ENCODE measurements at regions of chr10 and their contacts with region 1.

Region 1: DNA sequence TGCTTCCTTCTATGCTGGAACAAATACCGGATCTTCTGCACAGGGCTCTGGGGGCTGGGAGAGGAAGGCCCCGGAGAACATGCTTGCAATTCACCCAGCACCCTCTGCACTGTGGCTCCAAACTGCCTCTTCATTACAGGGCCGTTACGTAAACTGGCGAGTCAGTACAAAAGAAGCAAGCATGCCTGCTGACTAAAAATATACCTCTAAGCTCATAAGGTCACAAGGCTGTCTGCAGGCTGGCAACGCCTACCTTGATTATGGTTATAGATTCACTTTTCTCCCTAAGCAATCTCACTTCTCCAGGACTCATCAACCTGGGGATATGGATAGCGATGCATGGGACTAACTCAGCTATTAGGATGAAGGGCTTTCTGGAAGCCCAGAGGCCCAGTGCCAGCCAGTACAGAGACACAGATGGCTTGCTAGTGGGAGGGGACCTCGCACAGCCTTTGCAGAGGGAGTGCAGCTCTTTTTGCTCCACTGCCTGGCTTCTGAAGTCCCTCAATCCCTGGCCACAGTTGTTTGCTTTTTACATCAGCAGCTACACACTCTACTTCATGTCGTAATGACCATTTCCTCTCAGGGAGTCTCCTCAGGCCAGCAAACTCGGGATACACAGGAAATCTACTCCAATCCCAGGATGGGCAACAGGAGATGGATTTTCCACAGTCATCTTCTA is 96.1 kb downstream of the SH3PXD2A start:
- DNase-seq: no peak
- H3K4me3 ChIP-seq: no peak overlapping the region
- H3K27ac ChIP-seq: no peak overlapping the region
- H3K4me1 ChIP-seq: peaks cover 8 to 16% (median 12%) of the 10 kb centered on the region in 4 experiments
- H3K27me3 ChIP-seq: no peaks in the 10 kb centered on the region
- CTCF ChIP-seq: no peak
- EP300 ChIP-seq: no peak
- POLR2A ChIP-seq: no peak
- RAD21 ChIP-seq: no peak

Region 2: GRCh38 chr10:103507235-103508191 is 251.7 kb before region 1 on chr10:
- CTCF ChIA-PET with region 1: no interaction called
- POLR2A ChIA-PET with region 1: no interaction called
- DNase-seq: no peak
- H3K4me3 ChIP-seq: no peak overlapping the region
- H3K27ac ChIP-seq: no peak overlapping the region
- H3K4me1 ChIP-seq: no peaks in the 10 kb centered on the region; a peak in 2 of 7 replicates
- H3K27me3 ChIP-seq: no peaks in the 10 kb centered on the region
- CTCF ChIP-seq: peak in 1 of 3 experiments; percentile 15; a peak in 1 of 4 replicates
- EP300 ChIP-seq: no peak
- POLR2A ChIP-seq: no peak
- RAD21 ChIP-seq: peak; percentile 8 to 32; a peak in 3 of 4 replicates

Region 3: DNA sequence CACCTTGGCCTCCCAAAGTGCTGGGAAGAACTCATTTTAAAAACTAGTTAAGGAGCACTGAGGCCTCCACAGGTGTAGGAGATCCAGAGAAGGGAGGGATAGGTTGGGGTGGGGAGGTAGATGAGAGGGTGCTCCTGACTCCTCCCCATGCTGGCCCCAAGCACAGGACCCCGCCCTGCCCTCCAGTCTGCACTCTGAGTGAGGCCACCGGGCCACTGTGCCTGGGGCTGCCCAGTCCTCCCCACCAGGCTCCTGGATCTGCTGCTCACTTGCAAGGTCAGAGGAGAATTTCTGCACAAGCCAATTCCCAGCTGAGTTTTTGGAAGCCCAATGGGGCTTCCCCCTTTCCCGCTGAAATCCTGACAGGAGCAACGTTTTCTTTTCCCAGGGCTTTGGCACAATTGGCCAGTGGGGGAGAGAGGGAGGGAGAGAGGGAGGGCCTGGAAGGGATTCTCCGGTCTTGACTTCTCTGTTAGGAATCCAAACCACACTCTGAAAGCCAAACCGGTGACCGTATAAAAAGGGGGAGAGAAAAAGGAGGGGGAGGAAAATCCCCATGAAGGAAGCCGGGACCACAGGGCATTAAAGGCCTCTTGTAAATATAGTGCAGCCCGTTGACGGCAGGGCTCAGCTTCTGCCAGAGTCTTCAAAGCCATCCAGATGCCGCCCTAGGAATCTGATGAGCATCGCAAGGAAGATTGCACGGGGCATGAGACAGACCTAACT is 20.0 kb before region 1 on chr10:
- CTCF ChIA-PET with region 1: interaction called, 304 read pairs
- POLR2A ChIA-PET with region 1: interaction called, 3 read pairs
- DNase-seq: no peak
- H3K4me3 ChIP-seq: peak overlapping the region in 1 of 4 experiments; percentile 8; a peak in 2 of 8 replicates
- H3K27ac ChIP-seq: no peak overlapping the region
- H3K4me1 ChIP-seq: peaks cover 0 to 9% (median 2%) of the 10 kb centered on the region in 4 experiments; a peak in 3 of 7 replicates
- H3K27me3 ChIP-seq: no peaks in the 10 kb centered on the region
- CTCF ChIP-seq: no peak
- EP300 ChIP-seq: no peak
- POLR2A ChIP-seq: no peak
- RAD21 ChIP-seq: no peak

Region 4: GRCh38 chr10:103772096-103772845 is 13.0 kb after region 1 on chr10:
- CTCF ChIA-PET with region 1: interaction called, 237 read pairs
- POLR2A ChIA-PET with region 1: interaction called, 3 read pairs
- DNase-seq: peak; percentile 57 to 82
- H3K4me3 ChIP-seq: peak overlapping the region; percentile 26 to 64 (median 59)
- H3K27ac ChIP-seq: peak overlapping the region; percentile 16; the same call in 1 of the 2 replicates
- H3K4me1 ChIP-seq: peaks cover 0 to 11% (median 7%) of the 10 kb centered on the region in 4 experiments; a peak in 6 of 7 replicates
- H3K27me3 ChIP-seq: no peaks in the 10 kb centered on the region
- CTCF ChIP-seq: no peak
- EP300 ChIP-seq: peak in 1 of 2 experiments; percentile 76; a peak in 1 of 3 replicates
- POLR2A ChIP-seq: peak in 1 of 2 experiments; percentile 58; a peak in 2 of 3 replicates
- RAD21 ChIP-seq: no peak

Region 5: DNA sequence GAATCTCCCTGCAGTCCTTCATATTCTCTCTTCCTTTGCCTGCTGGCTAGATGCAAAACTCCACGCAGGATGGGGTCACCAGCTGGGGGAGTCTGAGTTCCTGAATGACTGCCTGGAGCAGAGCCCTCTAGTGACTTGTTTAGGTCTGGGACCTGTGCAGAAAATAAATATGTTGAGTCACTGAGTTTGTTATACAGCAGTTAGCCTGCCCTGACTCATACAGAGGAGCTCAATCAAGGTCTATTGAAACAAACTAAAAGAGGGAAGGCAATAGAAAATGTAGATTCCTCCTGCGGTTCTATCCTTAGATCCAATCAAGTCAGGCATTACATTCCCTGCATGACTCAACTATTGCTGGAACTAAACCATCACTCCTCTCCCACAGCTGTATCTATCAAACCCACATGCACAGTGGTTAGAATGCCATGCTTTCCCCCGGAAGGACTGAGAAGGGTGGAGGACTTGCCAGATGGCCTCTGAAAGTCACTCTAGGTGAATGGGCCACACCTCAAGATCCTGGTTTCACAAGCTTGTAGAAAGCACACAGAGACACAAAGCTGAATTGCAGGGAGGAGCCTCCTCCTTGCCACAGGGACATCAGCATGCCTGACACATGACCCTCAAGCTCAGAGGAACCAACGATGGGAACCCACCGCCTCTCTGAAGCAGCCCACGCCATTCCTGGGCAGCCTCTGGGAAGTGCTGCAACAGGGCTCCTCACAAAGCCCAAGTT is 22.3 kb after region 1 on chr10:
- CTCF ChIA-PET with region 1: interaction called, 73 read pairs
- POLR2A ChIA-PET with region 1: interaction called, 3 read pairs
- DNase-seq: no peak
- H3K4me3 ChIP-seq: no peak overlapping the region
- H3K27ac ChIP-seq: no peak overlapping the region
- H3K4me1 ChIP-seq: peaks cover 0 to 2% (median 0%) of the 10 kb centered on the region in 4 experiments; a peak in 1 of 7 replicates
- H3K27me3 ChIP-seq: no peaks in the 10 kb centered on the region
- CTCF ChIP-seq: peak; percentile 22 to 78 (median 56)
- EP300 ChIP-seq: no peak
- POLR2A ChIP-seq: no peak
- RAD21 ChIP-seq: peak; percentile 34 to 51; a peak in 3 of 4 replicates

Region 6: GRCh38 chr10:103895411-103896186 is 136.4 kb after region 1 on chr10:
- CTCF ChIA-PET with region 1: no interaction called
- POLR2A ChIA-PET with region 1: no interaction called
- DNase-seq: no peak
- H3K4me3 ChIP-seq: no peak overlapping the region
- H3K27ac ChIP-seq: no peak overlapping the region
- H3K4me1 ChIP-seq: peaks cover 0 to 2% (median 0%) of the 10 kb centered on the region in 4 experiments; a peak in 2 of 7 replicates
- H3K27me3 ChIP-seq: no peaks in the 10 kb centered on the region
- CTCF ChIP-seq: no peak
- EP300 ChIP-seq: no peak
- POLR2A ChIP-seq: no peak
- RAD21 ChIP-seq: no peak

Measured in H1 (cell line).